Panc1 (cell line): ENCODE measurements at regions of chr19 and their contacts with region 1.

Region 1: GRCh38 chr19:37148214-37148613 is 24.3 kb downstream of the ZNF585A start:
- DNase-seq: no peak
- ATAC-seq: no peak
- H3K4me3 ChIP-seq: no peak overlapping the region
- H3K27ac ChIP-seq: no peak overlapping the region
- H3K4me1 ChIP-seq: no peaks in the 10 kb centered on the region
- H3K27me3 ChIP-seq: no peaks in the 10 kb centered on the region
- CTCF ChIP-seq: no peak

Region 2: DNA sequence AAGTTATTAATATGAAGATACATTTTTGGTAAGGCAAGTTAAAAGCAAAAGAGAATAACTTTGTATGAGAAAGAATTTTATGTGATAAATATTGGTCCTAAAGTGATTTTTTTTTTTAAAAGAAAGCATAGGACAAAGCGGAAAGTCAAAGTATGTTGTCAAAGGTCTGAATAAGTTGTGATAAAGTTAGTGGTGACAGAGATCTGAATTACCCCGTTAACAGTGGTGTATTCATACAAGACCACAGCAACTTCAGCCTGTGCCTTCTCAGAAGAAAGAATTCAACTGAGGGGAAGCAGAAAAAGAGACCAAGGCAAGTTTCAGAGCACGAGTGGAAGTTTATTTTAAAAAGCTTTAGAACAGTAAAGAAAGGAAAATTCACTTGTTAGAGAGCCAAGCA is 639.9 kb before region 1 on chr19:
- CTCF ChIA-PET with region 1: no interaction called
- POLR2A ChIA-PET with region 1: interaction called, 16 read pairs
- in situ Hi-C with region 1: no loop called
- intact Hi-C with region 1: no loop called
- DNase-seq: no peak
- ATAC-seq: no peak
- H3K4me3 ChIP-seq: no peak overlapping the region
- H3K27ac ChIP-seq: no peak overlapping the region
- H3K4me1 ChIP-seq: no peaks in the 10 kb centered on the region
- H3K27me3 ChIP-seq: no peaks in the 10 kb centered on the region
- CTCF ChIP-seq: no peak

Region 3: GRCh38 chr19:37114020-37114419 is 34.2 kb before region 1 on chr19:
- CTCF ChIA-PET with region 1: no interaction called
- POLR2A ChIA-PET with region 1: no interaction called
- in situ Hi-C with region 1: no loop called
- intact Hi-C with region 1: no loop called
- DNase-seq: no peak
- ATAC-seq: no peak
- H3K4me3 ChIP-seq: no peak overlapping the region
- H3K27ac ChIP-seq: no peak overlapping the region
- H3K4me1 ChIP-seq: no peaks in the 10 kb centered on the region
- H3K27me3 ChIP-seq: no peaks in the 10 kb centered on the region
- CTCF ChIP-seq: peak; percentile 28; the same call in 1 of the 2 replicates